Activated CD8-positive, alpha-beta T cell treated with anti-CD3 and anti-CD28 coated beads, Interleukin-2, amount 10 ng/mL, durations not matched to agents 7 days and 5 days (primary cell): ENCODE measurements at regions of chr10 and their contacts with region 1.

Region 1: DNA sequence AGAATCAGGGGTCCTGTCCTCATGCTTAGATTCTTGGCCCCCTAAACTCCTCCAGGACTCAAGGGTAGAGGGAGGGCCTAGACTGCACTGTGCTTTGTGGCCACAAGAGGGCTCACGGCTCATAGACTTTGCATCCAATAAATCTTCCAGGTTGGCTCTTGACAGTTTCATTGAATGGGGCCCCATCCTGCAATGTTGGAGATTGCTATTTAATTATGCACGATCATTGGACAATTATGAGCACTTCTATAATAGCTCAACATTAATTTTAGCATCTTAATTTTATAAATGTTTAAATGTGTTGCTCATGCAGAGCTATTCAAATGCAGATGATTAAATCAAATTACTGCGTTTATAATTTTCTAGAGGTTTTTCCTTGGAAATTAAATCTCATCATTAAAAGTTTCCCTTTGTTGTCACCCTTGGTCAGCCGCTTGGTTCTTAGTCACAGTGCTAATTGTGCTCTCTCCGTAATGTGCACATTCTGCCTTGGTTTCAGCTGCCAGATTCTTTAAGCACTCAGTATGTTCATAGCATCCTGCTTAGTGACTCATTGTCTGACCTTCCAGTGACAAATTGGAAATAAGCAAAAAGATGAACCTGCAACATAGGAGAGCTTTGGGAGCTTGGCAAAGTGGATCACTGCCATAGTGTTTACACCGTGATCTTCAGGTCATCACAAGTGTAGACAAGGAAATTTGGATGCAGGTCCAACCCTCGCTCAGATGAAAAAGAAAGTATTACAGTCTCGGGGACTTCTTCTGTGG is 33.4 kb upstream of the PLPP4 start:
- DNase-seq: peak; percentile 48
- ATAC-seq: no peak
- H3K4me3 Mint-ChIP-seq: no peak overlapping the region
- H3K27ac Mint-ChIP-seq: no peak overlapping the region
- H3K4me1 Mint-ChIP-seq: no peaks in the 10 kb centered on the region
- H3K27me3 Mint-ChIP-seq: no peaks in the 10 kb centered on the region

Region 2: DNA sequence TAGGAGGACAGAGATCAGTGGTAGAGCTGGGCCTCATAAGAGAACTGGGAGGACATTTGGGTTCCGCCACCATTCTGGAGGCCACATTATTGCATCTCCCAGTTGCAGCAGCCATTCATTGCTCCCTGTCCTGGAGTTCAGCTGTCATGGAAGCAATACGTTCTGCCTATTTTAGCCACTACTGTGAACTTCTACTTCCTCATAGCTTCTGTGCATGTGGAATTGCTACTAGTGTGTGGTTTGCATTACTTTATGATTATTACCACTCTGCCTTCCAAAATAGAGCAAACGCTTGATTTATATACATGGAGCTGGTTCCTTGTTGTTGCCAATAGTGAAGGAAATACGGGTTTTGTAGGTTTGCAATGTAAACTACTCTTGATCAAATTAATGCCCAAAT is 13.8 kb before region 1 on chr10:
- CTCF ChIA-PET with region 1: interaction called, 13 read pairs
- POLR2A ChIA-PET with region 1: no interaction called
- DNase-seq: no peak
- ATAC-seq: no peak
- H3K4me3 Mint-ChIP-seq: no peak overlapping the region
- H3K27ac Mint-ChIP-seq: no peak overlapping the region
- H3K4me1 Mint-ChIP-seq: no peaks in the 10 kb centered on the region
- H3K27me3 Mint-ChIP-seq: no peaks in the 10 kb centered on the region

Region 3: DNA sequence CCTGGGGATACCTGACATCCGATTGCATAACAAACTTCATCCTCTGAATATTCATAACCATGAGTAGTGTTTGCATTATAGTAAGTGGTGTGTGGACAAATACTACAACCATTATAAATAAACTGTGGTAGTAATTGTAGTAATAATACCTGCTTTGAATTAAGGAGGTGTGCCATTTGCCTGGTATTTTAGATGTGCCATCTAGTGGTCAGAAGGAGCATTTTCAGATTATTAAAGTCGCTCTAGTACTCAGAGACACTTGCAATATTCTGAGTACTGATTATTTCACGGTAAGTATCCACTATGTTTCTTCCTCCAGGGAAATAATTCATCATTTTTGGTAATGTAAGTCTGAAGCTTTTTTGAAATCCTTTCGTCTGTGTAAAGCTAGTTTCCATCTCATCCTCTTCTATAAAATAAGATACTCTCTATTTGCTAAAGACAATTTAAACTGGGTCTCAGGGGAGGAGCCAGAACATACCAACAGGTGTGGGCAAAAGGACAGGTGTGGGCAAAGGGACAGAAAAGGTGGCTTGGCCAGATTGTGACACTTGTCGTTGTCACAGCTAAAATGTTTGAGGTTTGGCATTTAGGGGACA is 312.3 kb after region 1 on chr10:
- CTCF ChIA-PET with region 1: interaction called, 18 read pairs
- POLR2A ChIA-PET with region 1: no interaction called
- DNase-seq: no peak
- ATAC-seq: peak; percentile 40
- H3K4me3 Mint-ChIP-seq: no peak overlapping the region
- H3K27ac Mint-ChIP-seq: no peak overlapping the region
- H3K4me1 Mint-ChIP-seq: no peaks in the 10 kb centered on the region
- H3K27me3 Mint-ChIP-seq: peaks cover 2% of the 10 kb centered on the region